Calu3 (cell line): ENCODE measurements at regions of chr5 and their contacts with region 1.

Region 1: GRCh38 chr5:112419986-112420864 is 1.1 kb upstream of the EPB41L4A start:
- DNase-seq: peak; percentile 94
- H3K4me3 Mint-ChIP-seq: peak overlapping the region; percentile 93
- H3K27ac Mint-ChIP-seq: peak overlapping the region; percentile 40
- H3K4me1 Mint-ChIP-seq: no peaks in the 10 kb centered on the region
- H3K27me3 Mint-ChIP-seq: no peaks in the 10 kb centered on the region
- CTCF ChIP-seq: peak; percentile 96

Region 2: GRCh38 chr5:111135946-111136345 is 1284.3 kb before region 1 on chr5:
- CTCF ChIA-PET with region 1: no interaction called
- intact Hi-C with region 1: no loop called
- DNase-seq: no peak
- H3K4me3 Mint-ChIP-seq: no peak overlapping the region
- H3K27ac Mint-ChIP-seq: no peak overlapping the region
- H3K4me1 Mint-ChIP-seq: no peaks in the 10 kb centered on the region
- H3K27me3 Mint-ChIP-seq: no peaks in the 10 kb centered on the region
- CTCF ChIP-seq: no peak

Region 3: GRCh38 chr5:112174959-112175594 is 245.1 kb before region 1 on chr5:
- CTCF ChIA-PET with region 1: interaction called, 20 read pairs
- intact Hi-C with region 1: loop called (anchors 1 kb)
- DNase-seq: peak; percentile 57
- H3K4me3 Mint-ChIP-seq: no peak overlapping the region
- H3K27ac Mint-ChIP-seq: no peak overlapping the region
- H3K4me1 Mint-ChIP-seq: no peaks in the 10 kb centered on the region
- H3K27me3 Mint-ChIP-seq: no peaks in the 10 kb centered on the region
- CTCF ChIP-seq: peak; percentile 67

Region 4: GRCh38 chr5:112221128-112221527 is 199.1 kb before region 1 on chr5:
- CTCF ChIA-PET with region 1: interaction called, 24 read pairs
- intact Hi-C with region 1: loop called (anchors 5 kb)
- DNase-seq: no peak
- H3K4me3 Mint-ChIP-seq: no peak overlapping the region
- H3K27ac Mint-ChIP-seq: peak overlapping the region; percentile 7
- H3K4me1 Mint-ChIP-seq: peaks cover 41% of the 10 kb centered on the region
- H3K27me3 Mint-ChIP-seq: no peaks in the 10 kb centered on the region
- CTCF ChIP-seq: no peak

Region 5: GRCh38 chr5:112316006-112316405 is 104.2 kb before region 1 on chr5:
- CTCF ChIA-PET with region 1: interaction called, 9 read pairs
- intact Hi-C with region 1: loop called (anchors 5 kb)
- DNase-seq: peak; percentile 39
- H3K4me3 Mint-ChIP-seq: no peak overlapping the region
- H3K27ac Mint-ChIP-seq: peak overlapping the region; percentile 60
- H3K4me1 Mint-ChIP-seq: peaks cover 49% of the 10 kb centered on the region
- H3K27me3 Mint-ChIP-seq: no peaks in the 10 kb centered on the region
- CTCF ChIP-seq: no peak

Region 6: GRCh38 chr5:112492291-112492690 is 72.1 kb after region 1 on chr5:
- CTCF ChIA-PET with region 1: interaction called, 18 read pairs
- intact Hi-C with region 1: loop called (anchors 5 kb)
- DNase-seq: peak; percentile 77
- H3K4me3 Mint-ChIP-seq: no peak overlapping the region
- H3K27ac Mint-ChIP-seq: no peak overlapping the region
- H3K4me1 Mint-ChIP-seq: no peaks in the 10 kb centered on the region
- H3K27me3 Mint-ChIP-seq: no peaks in the 10 kb centered on the region
- CTCF ChIP-seq: peak; percentile 84